Cardiac septum (tissue), 1 donor: ENCODE measurements at regions of chr12 and their contacts with region 1.

Region 1: GRCh38 chr12:13278249-13278787 is 81.8 kb downstream of the EMP1 start:
- DNase-seq: peak; percentile 87

Region 2: DNA sequence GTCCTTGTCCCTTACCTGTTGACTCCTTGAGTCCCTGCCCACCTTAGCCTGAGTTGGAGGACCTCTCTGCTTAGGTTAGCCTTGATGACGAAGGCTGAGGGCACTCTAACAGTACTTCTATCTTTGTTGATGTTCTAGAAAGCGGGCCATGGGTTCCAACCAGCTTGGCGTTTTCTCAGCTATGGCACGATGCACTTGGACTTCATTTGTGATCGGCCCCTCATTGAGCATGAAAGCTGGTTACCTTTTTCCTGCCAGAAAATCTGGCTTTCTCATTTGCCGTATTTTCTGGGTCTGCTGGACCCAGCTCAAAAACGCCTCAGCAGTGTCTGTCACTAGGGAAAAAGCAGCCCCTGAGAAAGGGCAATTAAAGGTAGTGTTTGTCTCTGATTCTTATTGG is 209.0 kb after region 1 on chr12:
- intact Hi-C with region 1: no loop called
- DNase-seq: no peak

Region 3: DNA sequence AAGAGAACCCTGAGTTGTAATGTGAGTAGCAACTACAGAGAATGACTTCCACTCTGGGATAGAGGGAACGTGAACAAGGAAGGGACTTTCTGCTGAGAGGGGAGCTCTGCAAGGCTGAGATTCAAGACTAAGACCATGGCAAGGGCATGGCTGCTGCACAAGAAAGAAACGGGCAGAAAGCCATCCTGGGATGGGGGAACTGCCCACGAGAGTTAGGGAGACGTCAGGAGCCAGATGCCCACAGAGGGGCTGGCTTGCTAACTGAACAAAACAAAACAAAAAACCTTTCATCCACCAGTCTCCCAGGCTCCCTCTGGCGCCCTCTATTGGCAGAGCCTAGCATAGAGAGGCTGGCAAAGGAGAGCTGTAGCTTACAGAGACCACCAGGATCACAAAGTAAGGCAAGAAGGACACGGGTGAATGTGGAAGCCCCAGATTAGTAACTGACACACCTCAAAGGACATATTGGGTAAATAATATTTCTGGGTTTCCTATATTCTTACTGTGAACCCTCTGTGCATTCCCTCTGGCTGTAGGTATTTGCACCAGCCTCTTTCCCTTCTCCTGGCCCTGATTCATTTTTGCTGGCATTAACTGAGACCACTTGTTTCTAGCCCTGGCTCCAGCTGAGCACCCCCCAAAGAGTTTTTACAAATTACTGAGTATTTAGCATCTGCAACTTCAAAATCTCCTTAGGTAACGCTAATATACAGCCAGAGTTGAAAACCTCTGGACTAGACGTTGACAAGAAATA is 256.5 kb after region 1 on chr12:
- intact Hi-C with region 1: loop called (anchors 5 kb)
- DNase-seq: no peak

Region 4: DNA sequence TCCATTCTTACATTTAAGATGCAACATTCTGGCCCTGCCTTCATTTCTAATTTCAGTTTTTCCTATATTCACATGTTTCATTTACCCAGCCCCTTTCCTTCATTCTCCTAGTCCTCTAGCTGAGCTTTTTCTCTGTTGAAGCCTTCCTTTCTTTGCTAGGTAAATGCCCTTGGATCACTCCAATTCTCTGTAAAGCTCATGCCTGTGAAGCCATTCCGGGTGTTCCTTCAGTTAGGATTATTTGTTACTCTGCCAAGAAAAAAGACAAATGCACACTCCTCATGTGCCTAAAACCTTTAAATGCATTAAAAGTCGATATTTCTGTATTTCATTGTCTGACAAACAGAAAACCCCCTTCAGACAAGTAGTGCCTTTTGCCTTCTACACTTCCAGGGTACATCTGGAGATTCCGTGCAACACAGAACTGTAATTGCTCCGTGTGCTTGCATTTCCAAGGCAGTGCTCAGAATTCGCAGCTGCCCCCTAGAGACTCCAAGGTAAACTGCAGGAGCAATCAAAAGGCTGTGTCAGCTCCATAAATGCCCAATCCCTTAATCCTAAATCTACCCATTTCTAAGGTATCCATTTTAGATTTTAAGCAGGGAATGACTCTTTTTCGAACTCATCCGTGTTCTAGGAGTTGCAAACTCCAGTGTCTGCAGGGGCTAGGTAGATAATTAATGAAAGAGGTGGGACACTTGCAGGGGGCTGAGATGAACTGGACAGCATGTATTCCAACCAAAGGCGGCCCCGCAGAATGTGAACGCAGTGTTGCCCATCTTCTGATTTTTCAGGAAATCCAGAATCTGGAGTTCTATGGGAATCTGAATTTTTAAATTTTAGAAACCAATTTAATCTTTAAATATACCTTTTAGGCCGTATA is 382.9 kb after region 1 on chr12:
- intact Hi-C with region 1: loop called (anchors 10 kb)
- DNase-seq: no peak